ENCODE measurements at regions of chr6 and their contacts with region 1.

Region 1: DNA sequence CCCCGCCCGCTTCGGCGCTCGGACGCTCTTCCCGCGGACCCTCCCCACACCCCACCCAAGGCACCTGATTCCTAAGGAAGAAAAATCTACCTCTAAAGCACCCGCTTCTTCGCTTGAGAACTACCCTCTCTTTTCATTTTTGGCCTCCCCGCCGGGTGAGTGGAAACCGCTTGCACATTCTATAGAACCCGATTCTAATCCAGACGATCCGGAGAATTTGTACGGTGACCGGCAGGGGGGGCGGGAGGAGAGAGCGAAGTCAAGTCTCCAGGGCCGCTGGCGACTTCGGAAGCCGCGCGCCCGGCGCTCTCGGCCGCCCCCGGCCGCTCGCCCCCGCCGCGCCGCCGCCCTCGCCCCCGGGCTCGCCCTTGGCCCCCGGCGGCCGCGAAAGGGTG is at the start of gene RBM24:
- DNase-seq: peak; percentile 80
- H3K4me3 ChIP-seq: peak within 1 kb of the TSS; percentile 57
- H3K27ac ChIP-seq: no peak within 1 kb of the TSS
- H3K4me1 ChIP-seq: peaks cover 5% of the 10 kb centered on the region
- H3K27me3 ChIP-seq: peaks cover 6% of the 10 kb centered on the region
- CTCF ChIP-seq: peak; percentile 33; the same call in 1 of the 2 replicates
- total RNA-seq, gene RBM24: 0.24 and 0.55 TPM in 2 replicates

Region 2: DNA sequence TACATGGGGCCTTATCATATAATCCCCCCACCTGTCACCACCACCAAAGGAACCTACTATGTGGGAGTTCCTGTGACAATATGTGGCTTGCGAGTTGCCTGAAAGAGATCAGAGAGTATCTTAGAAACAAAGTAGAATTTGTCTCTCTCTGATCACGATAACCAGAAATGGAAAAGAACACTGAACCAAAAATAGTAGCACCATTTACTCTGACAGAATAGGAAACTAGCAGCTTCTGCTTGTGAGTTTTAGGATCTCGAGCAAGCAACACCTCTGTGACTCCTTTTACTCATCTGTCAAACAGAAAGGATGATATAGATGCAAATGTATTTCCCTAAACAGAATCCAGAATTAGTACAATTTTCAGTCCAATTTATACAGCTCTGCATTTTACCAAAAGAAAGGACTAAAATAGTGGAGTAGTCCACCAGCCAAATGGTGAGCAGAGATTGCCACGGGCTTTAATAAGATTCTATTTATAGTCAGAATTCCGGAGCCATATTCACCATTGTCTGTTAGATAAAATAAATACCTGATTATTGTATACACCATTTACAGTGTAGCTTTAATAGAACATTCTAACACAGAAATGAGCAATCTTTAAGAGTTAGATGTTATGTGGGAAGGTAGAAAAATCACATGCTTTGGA is 199.1 kb before region 1 on chr6:
- CTCF ChIA-PET with region 1: no interaction called
- POLR2A ChIA-PET with region 1: no interaction called
- intact Hi-C with region 1: no loop called
- DNase-seq: no peak
- H3K4me3 ChIP-seq: no peak overlapping the region
- H3K27ac ChIP-seq: no peak overlapping the region
- H3K4me1 ChIP-seq: peaks cover 16% of the 10 kb centered on the region
- H3K27me3 ChIP-seq: no peaks in the 10 kb centered on the region
- CTCF ChIP-seq: no peak

Region 3: GRCh38 chr6:17250237-17250636 is 30.9 kb before region 1 on chr6:
- CTCF ChIA-PET with region 1: no interaction called
- POLR2A ChIA-PET with region 1: interaction called, 16 read pairs
- intact Hi-C with region 1: no loop called
- DNase-seq: no peak
- H3K4me3 ChIP-seq: no peak overlapping the region
- H3K27ac ChIP-seq: no peak overlapping the region
- H3K4me1 ChIP-seq: no peaks in the 10 kb centered on the region
- H3K27me3 ChIP-seq: no peaks in the 10 kb centered on the region
- CTCF ChIP-seq: no peak